ENCODE measurements at regions of chr13 and their contacts with region 1.

Region 1: GRCh38 chr13:51125498-51126226 is 14.6 kb upstream of the C13orf42 start:
- DNase-seq: peak in 6 of 9 donors; percentile 11 to 41 (median 26)
- ATAC-seq: peak; percentile 80
- H3K4me3 ChIP-seq: no peak overlapping the region
- H3K4me3 Mint-ChIP-seq: no peak overlapping the region
- H3K27ac ChIP-seq: no peak overlapping the region
- H3K27ac Mint-ChIP-seq: no peak overlapping the region
- H3K4me1 ChIP-seq: no peaks in the 10 kb centered on the region
- H3K4me1 Mint-ChIP-seq: peaks cover 0 to 13% (median 0%) of the 10 kb centered on the region in 7 donors
- H3K27me3 ChIP-seq: no peaks in the 10 kb centered on the region
- H3K27me3 Mint-ChIP-seq: peaks cover 0 to 21% (median 13%) of the 10 kb centered on the region in 5 donors

Region 2: GRCh38 chr13:51781246-51782022 is 655.8 kb after region 1 on chr13:
- CTCF ChIA-PET with region 1: no interaction called
- POLR2A ChIA-PET with region 1: no interaction called
- intact Hi-C with region 1: loop called in 1 of 2 experiments (anchors 5 kb)
- DNase-seq: no peak
- ATAC-seq: peak; percentile 55
- H3K4me3 ChIP-seq: no peak overlapping the region
- H3K4me3 Mint-ChIP-seq: no peak overlapping the region
- H3K27ac ChIP-seq: no peak overlapping the region
- H3K27ac Mint-ChIP-seq: peak overlapping the region in 2 of 9 donors; percentile 12 to 66
- H3K4me1 ChIP-seq: no peaks in the 10 kb centered on the region
- H3K4me1 Mint-ChIP-seq: peaks cover 0 to 7% (median 0%) of the 10 kb centered on the region in 7 donors
- H3K27me3 ChIP-seq: no peaks in the 10 kb centered on the region
- H3K27me3 Mint-ChIP-seq: no peaks in the 10 kb centered on the region

Measured in naive thymus-derived CD4-positive, alpha-beta T cell (primary cell).